ENCODE measurements at regions of chr1 and their contacts with region 1.

Region 1: GRCh38 chr1:154442006-154442740 is 37.0 kb downstream of the IL6R start:
- DNase-seq: no peak
- H3K4me3 Mint-ChIP-seq: no peak overlapping the region
- H3K27ac Mint-ChIP-seq: no peak overlapping the region
- H3K4me1 Mint-ChIP-seq: peaks cover 53% of the 10 kb centered on the region
- H3K27me3 Mint-ChIP-seq: peaks cover 4% of the 10 kb centered on the region

Region 2: GRCh38 chr1:154404984-154405761 is 37.0 kb before region 1 on chr1 and contains the start of gene IL6R:
- intact Hi-C with region 1: loop called (anchors 1 kb)
- DNase-seq: peak; percentile 48
- H3K4me3 Mint-ChIP-seq: peak within 1 kb of the TSS; percentile 73
- H3K27ac Mint-ChIP-seq: peak within 1 kb of the TSS; percentile 64
- H3K4me1 Mint-ChIP-seq: peaks cover 66% of the 10 kb centered on the region
- H3K27me3 Mint-ChIP-seq: peaks cover 6% of the 10 kb centered on the region
- total RNA-seq, gene IL6R: 1.6 and 2.2 TPM in 2 replicates

Region 3: DNA sequence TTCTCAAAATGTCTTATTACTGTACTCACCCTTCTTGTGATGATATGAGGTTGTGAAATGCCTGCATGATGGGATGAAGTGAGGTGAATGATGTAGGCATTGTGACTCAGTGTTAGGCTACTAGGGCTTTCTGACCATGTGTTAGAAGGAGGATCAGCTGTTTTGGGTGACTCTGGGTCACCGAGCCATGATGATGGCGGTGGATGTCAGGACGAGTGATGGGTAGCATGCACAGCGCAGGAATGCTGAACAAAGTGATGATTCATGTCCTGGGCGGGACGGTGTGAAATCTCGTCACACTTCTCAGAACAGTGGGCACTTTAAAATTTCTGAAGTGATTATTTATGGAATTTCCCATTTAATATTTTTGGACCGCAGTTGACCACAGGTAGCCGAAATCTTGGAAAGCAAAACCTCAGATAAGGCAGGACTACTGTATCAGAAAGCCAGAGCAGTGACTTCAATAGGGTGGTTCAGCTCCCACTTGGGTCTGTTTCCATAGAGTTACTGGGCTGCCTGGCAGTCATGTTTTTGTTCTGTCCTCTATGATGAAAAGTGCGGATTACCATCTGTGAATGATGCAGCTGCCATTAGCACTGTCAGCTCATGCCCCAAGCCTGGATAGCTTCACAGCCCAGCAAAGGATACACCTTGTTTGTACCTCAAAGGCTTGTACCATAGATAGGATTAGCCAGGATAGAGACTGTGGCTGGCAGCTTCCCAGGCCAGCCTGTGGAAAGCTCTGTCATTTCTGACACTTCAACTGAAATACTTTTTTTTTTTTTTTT is 10.4 kb before region 1 on chr1:
- intact Hi-C with region 1: loop called (anchors 1 kb)
- DNase-seq: no peak
- H3K4me3 Mint-ChIP-seq: no peak overlapping the region
- H3K27ac Mint-ChIP-seq: peak overlapping the region; percentile 7
- H3K4me1 Mint-ChIP-seq: peaks cover 21% of the 10 kb centered on the region
- H3K27me3 Mint-ChIP-seq: no peaks in the 10 kb centered on the region

Region 4: DNA sequence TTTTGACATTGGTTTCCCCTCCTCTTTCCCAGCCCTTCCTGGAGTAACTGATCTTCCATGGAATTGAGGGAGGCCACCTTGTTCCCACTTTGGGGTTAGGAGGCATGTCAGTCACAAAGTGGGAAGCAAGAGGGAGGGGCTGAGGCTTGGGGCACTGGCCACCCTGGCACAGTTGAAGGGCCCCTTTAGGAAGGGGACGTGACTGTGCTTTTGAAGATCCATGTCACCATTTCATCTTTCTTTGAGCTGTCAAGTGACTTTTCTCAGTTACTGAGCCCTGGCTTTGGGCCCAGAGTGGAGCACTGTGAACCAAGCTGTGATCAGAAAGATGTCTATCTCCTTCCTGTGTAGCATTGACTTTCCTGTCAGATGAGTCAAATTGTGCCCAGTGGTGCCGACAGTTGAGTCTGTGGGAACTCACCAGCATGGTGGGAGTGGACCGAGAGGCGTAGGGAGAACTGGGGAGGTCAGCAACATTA is 21.4 kb after region 1 on chr1:
- intact Hi-C with region 1: loop called (anchors 1 kb)
- DNase-seq: peak; percentile 66
- H3K4me3 Mint-ChIP-seq: peak overlapping the region; percentile 11
- H3K27ac Mint-ChIP-seq: peak overlapping the region; percentile 67
- H3K4me1 Mint-ChIP-seq: peaks cover 57% of the 10 kb centered on the region
- H3K27me3 Mint-ChIP-seq: no peaks in the 10 kb centered on the region

Region 5: GRCh38 chr1:155044812-155045690 is 602.9 kb after region 1 on chr1:
- intact Hi-C with region 1: no loop called
- DNase-seq: peak; percentile 51
- H3K4me3 Mint-ChIP-seq: no peak overlapping the region
- H3K27ac Mint-ChIP-seq: peak overlapping the region; percentile 44
- H3K4me1 Mint-ChIP-seq: peaks cover 17% of the 10 kb centered on the region
- H3K27me3 Mint-ChIP-seq: no peaks in the 10 kb centered on the region